ENCODE measurements at regions of chr16 and their contacts with region 1.

Region 1: GRCh38 chr16:23842137-23842600 is 6.4 kb downstream of the PRKCB start:
- DNase-seq: peak; percentile 73
- H3K4me3 Mint-ChIP-seq: peak overlapping the region; percentile 28
- H3K27ac Mint-ChIP-seq: peak overlapping the region; percentile 87
- H3K4me1 Mint-ChIP-seq: peaks cover 70% of the 10 kb centered on the region
- H3K27me3 Mint-ChIP-seq: no peaks in the 10 kb centered on the region

Region 2: DNA sequence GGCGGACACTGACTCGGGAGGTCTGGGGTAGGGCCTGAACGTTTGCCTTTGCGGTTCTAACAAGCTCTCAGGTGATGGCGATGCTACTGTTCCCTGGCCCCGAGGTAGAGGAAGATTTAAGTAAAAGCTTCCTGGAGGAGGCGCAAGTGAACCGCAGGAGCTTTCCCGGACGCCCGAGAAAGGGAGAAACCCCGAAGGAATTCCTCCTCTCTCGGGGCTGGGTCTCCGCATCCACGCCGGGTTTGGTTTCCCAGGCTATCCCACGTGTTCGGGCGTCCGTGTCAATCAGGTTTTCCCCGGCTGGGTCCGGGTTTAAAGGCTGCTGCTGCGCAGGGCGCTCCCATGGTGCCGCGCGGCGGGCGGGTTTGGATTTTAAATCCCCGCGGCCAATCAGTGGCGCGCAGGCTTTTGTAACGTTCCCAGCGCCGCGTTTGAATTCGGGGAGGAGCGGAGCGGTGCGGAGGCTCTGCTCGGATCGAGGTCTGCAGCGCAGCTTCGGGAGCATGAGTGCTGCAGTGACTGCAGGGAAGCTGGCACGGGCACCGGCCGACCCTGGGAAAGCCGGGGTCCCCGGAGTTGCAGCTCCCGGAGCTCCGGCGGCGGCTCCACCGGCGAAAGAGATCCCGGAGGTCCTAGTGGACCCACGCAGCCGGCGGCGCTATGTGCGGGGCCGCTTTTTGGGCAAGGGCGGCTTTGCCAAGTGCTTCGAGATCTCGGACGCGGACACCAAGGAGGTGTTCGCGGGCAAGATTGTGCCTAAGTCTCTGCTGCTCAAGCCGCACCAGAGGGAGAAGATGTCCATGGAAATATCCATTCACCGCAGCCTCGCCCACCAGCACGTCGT is 163.5 kb before region 1 on chr16 and contains the start of gene PLK1:
- intact Hi-C with region 1: no loop called
- DNase-seq: peak; percentile 96
- H3K4me3 Mint-ChIP-seq: peak within 1 kb of the TSS; percentile 92
- H3K27ac Mint-ChIP-seq: peak within 1 kb of the TSS; percentile 85
- H3K4me1 Mint-ChIP-seq: peaks cover 36% of the 10 kb centered on the region
- H3K27me3 Mint-ChIP-seq: no peaks in the 10 kb centered on the region
- total RNA-seq, gene PLK1: 45.7 and 51.7 TPM in 2 replicates

Region 3: GRCh38 chr16:23826528-23827045 is 15.6 kb before region 1 on chr16:
- intact Hi-C with region 1: loop called (anchors 1 kb)
- DNase-seq: peak; percentile 77
- H3K4me3 Mint-ChIP-seq: peak overlapping the region; percentile 41
- H3K27ac Mint-ChIP-seq: peak overlapping the region; percentile 52
- H3K4me1 Mint-ChIP-seq: peaks cover 26% of the 10 kb centered on the region
- H3K27me3 Mint-ChIP-seq: no peaks in the 10 kb centered on the region

Region 4: DNA sequence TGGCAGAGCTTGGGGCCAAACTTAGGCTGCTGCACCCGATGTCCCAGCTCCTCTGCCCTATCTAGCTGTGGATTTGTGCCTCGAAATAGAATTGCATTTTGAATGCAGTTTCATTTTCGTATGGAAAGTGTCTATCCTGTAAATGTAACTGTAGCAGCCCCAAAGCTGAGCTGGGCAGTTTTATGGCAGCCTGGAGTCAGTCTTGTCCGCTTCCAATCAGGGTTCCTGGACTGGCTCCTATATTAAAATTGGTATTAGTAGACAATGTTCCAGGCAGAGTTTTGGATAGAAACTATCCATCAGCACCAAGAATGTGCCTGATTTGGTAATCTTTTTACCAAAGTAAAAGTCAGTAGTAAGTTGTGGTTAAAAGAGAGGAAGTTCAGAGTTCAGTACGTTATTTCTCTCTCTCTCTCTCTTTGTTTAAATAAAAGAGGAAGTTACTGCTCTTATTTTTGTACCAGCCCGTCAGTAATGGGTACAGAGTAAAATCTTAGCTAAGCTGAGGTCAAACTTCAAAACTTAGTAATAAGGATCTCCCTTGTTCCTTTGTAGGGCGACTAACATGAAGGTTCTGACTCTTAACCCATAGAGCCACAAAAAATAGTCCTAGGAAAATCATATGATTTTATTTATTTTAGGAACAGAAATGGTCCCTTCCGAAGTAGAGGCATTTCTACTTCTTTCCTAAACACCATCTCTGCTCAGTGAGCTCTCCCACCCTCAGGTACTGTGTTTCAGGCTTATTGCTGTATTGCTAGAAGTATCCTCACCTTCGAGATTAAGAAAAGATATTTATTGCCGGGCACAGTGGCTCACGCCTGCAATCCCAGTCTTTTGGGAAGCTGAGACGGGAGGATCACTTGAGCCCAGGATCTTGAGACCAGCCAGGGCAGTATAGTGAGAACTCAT is 21.6 kb after region 1 on chr16:
- intact Hi-C with region 1: loop called (anchors 1 kb)
- DNase-seq: peak; percentile 83
- H3K4me3 Mint-ChIP-seq: peak overlapping the region; percentile 80
- H3K27ac Mint-ChIP-seq: peak overlapping the region; percentile 90
- H3K4me1 Mint-ChIP-seq: peaks cover 62% of the 10 kb centered on the region
- H3K27me3 Mint-ChIP-seq: no peaks in the 10 kb centered on the region

Region 5: DNA sequence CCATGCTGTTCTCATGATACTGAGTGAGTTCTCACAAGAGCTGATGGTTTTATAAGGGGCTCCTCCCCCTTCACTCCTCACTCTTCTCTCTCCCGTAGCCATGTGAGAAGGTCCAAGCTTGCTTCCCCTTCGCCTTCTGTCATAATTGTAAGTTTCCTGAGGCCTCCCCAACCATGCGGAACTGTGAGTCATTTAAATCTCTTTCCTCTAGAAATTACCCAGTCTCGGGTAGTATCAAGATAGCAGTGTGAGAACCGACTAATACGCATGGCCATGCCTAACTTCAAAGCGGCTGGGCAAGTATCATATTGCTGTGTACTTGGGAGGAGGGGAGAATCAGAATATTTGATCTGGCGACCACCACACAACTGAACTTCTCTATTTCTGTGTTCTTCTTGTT is 82.0 kb after region 1 on chr16:
- intact Hi-C with region 1: no loop called
- DNase-seq: no peak
- H3K4me3 Mint-ChIP-seq: no peak overlapping the region
- H3K27ac Mint-ChIP-seq: no peak overlapping the region
- H3K4me1 Mint-ChIP-seq: peaks cover 23% of the 10 kb centered on the region
- H3K27me3 Mint-ChIP-seq: no peaks in the 10 kb centered on the region

Region 6: DNA sequence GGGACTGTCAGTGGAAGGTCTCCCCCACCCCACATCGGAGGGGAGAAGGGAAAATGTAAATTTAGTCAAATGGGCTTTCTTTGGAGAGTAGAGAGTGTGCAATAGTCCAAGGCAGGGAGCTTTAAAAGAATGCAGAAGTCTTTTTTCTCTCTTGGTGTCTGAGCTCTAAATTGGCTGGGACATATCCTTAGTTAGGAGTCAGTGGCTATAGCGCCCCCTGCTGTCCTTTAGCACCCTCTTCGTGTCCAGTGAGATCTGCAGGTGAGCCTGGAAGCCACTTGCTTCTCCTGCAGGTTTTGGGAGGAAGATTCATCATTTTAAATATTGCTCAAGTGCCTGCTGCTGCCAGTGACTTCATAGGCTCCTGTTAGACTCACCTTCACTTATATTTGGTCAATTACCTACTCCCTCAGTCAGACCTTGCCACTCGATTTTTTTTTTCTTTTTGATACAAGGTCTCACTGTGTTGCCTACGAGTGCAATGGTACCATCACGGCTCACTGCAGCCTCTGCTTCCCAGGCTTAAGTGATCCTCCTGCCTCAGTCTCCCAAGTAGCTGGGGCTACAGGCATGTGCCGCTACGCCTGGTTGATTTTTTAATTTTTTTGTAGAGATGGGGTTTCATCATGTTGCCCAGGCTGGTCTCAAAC is 168.4 kb after region 1 on chr16:
- intact Hi-C with region 1: no loop called
- DNase-seq: peak; percentile 93
- H3K4me3 Mint-ChIP-seq: no peak overlapping the region
- H3K27ac Mint-ChIP-seq: no peak overlapping the region
- H3K4me1 Mint-ChIP-seq: peaks cover 54% of the 10 kb centered on the region
- H3K27me3 Mint-ChIP-seq: no peaks in the 10 kb centered on the region

Region 7: DNA sequence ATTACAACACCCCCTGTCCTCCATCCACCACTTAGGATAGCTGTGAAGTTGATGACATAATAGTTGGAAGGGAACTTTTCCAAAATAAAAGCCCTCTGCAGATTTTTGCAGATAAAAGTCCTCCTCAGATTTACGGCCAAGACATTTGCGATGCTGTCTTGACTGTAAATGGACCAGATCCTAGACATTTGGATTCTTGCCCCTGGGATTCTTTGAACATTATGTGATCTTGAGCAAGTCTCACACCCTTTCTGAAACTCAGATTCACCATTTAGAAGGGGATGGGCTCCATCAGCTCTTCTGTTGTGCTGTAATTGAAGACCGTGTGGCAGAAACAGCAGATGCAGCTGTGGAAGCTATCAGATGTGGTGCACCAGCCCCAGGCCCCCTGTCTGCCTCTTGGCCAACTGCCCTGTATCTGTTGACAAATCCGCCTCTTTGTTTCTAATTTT is 260.1 kb after region 1 on chr16:
- intact Hi-C with region 1: no loop called
- DNase-seq: no peak
- H3K4me3 Mint-ChIP-seq: no peak overlapping the region
- H3K27ac Mint-ChIP-seq: no peak overlapping the region
- H3K4me1 Mint-ChIP-seq: no peaks in the 10 kb centered on the region
- H3K27me3 Mint-ChIP-seq: no peaks in the 10 kb centered on the region

Measured in activated CD4-positive, alpha-beta T cell treated with anti-CD3 and anti-CD28 coated beads, Interleukin-2, amount 10 ng/mL, durations not matched to agents 24 days and 14 days (primary cell).